ENCODE measurements at regions of chr3 and their contacts with region 1.

Region 1: GRCh38 chr3:10758304-10759061 is 57.5 kb upstream of the SLC6A11 start:
- DNase-seq: peak; percentile 72
- CTCF ChIP-seq: peak; percentile 87

Region 2: DNA sequence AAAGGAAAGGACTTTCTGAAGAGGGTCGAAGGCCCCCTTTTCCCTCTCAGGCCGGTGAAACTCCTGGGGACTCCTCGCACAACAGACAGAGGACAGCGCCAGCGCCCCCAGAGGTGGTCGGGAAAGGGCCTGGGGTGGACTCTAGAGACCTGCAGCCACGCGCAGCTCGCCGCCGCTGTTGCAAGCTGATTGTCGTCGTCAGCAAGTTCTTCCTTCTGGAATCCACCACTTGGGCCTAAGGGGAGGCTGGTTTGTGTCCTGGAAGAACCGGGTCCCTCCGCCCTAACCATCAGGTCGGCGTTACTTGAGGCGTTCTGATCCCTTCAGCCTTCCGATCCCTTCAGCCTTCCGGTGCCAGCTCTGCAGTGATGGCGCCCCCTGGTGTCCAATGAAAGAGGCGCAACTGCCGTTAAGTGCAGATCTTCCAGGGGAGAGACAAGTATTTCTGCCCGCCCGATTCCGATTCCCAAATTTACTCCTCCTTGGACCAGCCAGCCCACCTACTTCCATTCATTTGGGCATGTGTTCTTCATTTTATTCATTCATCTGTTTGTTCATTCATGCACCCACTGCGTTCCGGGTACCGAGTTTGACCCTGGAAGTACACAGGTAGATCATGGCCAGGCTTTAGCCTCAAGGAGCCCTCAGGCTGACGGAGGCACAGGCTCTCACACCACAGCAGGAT is 19.7 kb before region 1 on chr3:
- CTCF ChIA-PET with region 1: interaction called, 37 read pairs
- POLR2A ChIA-PET with region 1: no interaction called
- DNase-seq: peak; percentile 62
- CTCF ChIP-seq: peak; percentile 64

Region 3: GRCh38 chr3:10748040-10748439 is 10.4 kb before region 1 on chr3:
- CTCF ChIA-PET with region 1: interaction called, 28 read pairs
- POLR2A ChIA-PET with region 1: no interaction called
- DNase-seq: no peak
- CTCF ChIP-seq: no peak

Region 4: DNA sequence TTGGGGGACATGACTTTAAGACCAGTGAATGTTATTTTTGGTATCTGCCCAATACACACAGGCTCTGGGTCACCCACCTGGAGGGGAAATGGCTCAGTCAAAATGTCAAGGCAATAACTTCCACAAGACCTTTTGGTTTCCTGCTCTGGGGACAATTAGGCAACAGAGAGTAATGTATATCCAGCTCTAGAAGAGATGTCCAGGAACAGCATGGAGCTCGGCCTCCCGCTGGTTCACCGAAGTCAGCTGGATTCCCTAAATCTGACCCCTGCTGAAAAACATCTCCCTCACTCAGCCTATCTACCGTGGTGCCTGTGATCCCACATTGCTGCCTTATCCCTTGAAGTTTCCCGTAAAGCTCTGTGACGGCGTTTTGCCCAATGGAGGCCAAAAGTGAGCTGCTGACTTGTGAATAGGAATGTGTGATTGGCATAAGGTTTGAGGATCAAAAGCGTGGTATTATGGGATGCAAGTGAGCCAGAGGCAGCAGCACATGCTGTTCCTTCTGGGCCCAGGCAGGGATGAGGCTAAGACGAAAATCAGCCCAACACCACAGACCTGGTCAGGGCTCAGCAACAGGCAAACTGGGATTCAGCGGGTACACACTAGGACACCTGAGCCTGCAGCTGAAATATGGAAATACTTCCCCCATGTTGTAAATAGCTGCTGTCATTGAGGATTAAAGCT is 10.4 kb after region 1 on chr3:
- CTCF ChIA-PET with region 1: interaction called, 42 read pairs
- POLR2A ChIA-PET with region 1: no interaction called
- DNase-seq: no peak
- CTCF ChIP-seq: no peak

Region 5: DNA sequence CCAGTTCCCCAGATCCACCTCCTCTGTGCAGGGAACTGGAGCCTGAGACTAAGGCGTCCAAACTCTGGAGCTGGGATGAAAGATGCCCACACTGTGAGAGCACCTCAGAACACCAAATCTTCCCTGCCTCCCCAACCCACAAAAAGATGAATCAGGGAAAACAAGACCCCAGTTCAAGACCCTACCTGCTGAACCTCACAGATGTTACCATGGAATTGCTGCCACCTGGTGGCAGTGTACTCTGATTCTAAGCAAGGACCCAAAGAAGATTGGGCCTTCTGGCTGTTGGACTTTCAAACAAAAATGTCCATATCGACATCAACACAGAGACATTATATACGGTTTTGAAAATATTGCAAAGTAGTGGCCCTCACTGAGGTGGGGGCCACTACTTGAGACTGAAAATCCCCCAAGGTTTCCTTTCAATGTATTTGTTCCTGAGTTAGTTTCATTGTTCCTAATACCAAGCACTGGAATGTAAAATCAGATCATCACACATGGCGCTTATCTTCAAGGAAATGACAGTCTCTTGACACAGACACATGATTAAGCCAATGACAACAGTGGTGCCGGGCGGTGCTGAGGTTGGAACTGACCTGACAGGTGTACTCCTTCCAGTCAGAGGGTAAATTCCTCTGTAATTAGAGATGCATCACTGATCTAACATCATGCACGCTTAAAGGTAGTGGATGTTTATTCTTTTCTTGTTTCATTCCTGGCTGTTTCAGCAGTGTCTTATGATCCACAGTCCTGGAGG is 125.2 kb after region 1 on chr3:
- CTCF ChIA-PET with region 1: interaction called, 10 read pairs
- POLR2A ChIA-PET with region 1: no interaction called
- DNase-seq: peak; percentile 39
- CTCF ChIP-seq: peak; percentile 38

Region 6: DNA sequence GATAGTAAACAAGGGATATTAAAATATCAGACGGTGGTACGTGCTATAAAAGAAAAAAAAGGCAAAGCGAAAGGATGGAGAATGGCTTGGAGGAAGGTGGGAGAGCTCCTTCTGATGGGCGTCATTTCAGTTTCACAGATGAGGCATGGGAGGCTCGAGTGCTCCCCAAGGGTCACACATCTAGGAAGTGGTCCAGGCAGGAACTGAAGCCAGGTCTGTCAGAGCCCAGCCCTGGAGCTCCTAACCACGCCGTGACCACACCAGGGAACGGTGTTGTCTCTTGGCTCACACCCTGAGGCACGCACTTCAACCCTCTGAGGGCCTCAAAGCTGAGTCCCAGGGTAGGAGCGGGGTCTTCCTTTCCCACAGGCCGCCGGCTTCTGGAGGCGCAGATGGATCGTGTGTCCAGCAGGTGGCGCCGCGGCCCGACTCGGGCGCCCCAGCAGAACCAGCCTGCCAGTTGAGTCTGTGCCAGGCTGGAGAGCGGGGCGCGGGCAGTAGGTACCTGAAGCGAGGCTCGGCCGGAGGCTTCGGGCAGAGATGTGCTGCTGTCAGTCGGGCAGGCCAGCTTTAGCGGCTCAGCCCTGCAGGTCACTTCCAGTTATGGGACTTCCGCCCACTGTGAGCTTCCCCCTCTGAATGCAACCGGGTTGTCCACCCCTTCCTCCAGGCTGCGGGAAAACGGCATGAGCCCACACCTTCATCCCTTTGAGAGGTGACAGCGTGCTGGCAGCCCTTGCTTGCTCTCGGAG is 302.2 kb after region 1 on chr3:
- CTCF ChIA-PET with region 1: interaction called, 11 read pairs
- POLR2A ChIA-PET with region 1: no interaction called
- DNase-seq: peak; percentile 69
- CTCF ChIP-seq: peak; percentile 55

Region 7: GRCh38 chr3:11140054-11140712 is 381.7 kb after region 1 on chr3:
- CTCF ChIA-PET with region 1: no interaction called
- POLR2A ChIA-PET with region 1: no interaction called
- DNase-seq: peak; percentile 56
- CTCF ChIP-seq: no peak